ENCODE measurements at regions of chr4 and their contacts with region 1.

Region 1: GRCh38 chr4:36138220-36138619 is 106.1 kb downstream of the ARAP2 start:
- DNase-seq: no peak
- ATAC-seq: no peak

Region 2: DNA sequence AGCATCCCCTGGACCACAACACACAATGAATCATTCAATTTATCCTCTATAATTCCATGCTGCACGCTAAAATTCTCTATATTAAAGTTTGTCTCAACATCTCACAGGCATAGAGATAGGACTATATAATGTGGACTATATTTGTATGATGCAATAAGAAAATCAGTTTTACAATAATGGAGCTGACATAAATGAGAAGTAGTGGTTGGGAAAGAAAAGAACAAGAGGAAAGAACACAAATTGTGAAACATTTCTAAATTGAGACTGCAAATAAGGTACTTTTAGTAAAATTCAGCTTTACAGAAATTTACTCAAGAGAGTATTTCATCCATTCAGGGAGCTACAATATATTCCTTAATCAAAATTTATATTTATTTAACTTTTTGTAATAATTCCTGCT is 14.3 kb before region 1 on chr4:
- intact Hi-C with region 1: no loop called
- DNase-seq: no peak
- ATAC-seq: no peak

Region 3: DNA sequence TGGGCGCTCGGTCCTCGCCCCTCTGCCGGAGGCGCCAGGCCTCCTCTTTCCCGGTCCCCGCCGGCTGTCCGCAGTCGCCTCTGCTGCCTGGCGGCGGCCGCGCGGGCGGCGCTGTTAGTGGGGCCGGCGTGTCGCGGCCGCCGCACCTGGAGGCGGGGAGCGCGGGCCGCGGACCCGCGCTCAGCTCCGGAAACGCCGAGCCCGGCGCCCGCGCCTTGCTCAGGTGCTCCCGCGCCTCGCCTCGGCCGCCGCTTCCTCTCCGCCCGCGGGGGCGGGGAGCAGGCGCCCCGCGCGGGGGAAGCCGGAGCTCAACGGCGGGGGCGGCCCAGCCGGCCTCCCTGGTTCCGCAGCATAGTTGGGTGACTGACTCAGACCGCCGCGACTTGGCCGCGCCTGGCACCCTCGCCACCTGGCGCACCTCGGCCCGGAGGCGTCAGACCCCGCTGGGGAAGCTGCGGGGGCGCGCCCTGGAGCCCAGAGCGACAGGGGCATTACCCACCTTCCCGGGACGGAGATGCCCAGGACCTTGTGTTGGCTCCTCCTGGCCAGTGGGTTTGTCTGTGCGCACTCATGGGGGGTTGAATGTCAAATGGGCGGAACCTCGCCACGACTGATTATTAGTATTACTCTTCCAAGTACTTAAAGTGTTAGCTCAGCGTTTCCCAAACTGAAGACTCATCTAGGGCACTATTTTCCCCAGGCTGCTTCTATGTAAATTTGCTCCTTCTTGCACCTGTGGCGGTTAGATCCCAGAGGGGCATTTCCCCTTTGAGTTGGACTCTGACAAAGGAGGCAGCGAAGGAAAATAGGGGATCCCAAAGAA is 106.2 kb after region 1 on chr4 and contains the start of gene ARAP2:
- intact Hi-C with region 1: no loop called
- DNase-seq: peak; percentile 63
- ATAC-seq: peak; percentile 82
- total RNA-seq, gene ARAP2: 2.7 TPM

Region 4: DNA sequence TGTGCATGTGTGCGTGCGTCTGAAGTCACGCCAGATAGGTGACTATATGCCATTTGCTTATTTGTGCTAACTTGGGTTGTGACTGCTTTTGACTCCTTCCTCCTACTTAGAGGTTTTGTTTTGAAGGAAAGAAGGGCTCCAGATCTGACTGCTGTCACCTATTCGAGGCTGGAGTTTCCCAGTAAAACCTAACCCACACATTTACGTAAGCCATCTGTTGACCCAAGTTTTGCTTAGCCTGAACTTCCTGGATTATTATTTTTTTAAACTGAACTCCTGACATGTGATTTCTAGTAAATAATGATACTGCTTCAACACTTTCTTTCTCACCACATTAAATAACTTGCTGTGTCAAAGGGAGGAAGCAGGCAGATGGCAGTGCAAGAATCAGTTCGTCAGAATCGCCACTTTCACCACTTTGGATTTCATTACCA is 184.7 kb after region 1 on chr4:
- intact Hi-C with region 1: loop called (anchors 5 kb)
- DNase-seq: no peak
- ATAC-seq: peak; percentile 17